MCF 10A (cell line): ENCODE measurements at regions of chr1 and their contacts with region 1.

Region 1: DNA sequence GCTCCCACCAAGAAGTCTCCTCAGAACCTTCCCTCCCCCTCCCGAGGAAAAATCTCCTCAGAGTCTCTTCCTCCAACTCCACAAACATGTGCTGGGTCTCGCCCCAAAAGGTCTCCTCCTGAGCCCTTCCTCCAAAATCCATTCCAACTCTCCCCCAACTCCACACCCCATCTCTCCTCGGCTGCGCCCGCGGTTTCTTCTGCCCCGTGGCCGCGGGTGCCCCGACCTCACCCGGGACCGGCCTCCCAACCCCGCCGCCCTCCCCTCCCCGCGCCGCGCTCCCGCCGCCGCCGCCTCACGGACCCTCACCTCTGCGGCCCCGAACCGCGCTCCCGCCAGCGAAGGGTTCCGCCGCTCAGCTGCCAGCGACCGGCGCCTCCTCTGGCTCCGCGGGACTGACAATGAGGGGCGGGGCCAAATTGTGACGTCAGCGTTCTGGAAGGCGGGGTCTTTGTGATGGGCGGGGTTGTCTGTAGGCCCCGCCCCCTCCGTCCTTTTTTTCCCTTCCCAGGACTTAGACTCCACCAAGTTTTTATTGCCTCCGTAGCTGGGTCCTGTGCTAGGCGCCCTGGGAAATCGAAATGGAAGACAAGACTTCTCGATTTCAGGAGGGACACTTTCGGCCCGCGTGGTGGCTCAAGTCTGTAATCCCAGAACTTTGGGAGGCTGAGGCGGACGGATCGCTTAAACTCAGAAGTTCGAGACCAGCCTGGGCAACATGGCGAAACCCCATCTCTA is at the start of gene LUZP1:
- DNase-seq: peak; percentile 90
- H3K4me3 Mint-ChIP-seq: peak within 1 kb of the TSS; percentile 89
- H3K27ac Mint-ChIP-seq: peak within 1 kb of the TSS; percentile 89
- H3K4me1 Mint-ChIP-seq: peaks cover 26% of the 10 kb centered on the region
- H3K27me3 Mint-ChIP-seq: no peaks in the 10 kb centered on the region
- CTCF ChIP-seq: no peak
- total RNA-seq, gene LUZP1: 30.1 and 37.2 TPM in 2 replicates

Region 2: DNA sequence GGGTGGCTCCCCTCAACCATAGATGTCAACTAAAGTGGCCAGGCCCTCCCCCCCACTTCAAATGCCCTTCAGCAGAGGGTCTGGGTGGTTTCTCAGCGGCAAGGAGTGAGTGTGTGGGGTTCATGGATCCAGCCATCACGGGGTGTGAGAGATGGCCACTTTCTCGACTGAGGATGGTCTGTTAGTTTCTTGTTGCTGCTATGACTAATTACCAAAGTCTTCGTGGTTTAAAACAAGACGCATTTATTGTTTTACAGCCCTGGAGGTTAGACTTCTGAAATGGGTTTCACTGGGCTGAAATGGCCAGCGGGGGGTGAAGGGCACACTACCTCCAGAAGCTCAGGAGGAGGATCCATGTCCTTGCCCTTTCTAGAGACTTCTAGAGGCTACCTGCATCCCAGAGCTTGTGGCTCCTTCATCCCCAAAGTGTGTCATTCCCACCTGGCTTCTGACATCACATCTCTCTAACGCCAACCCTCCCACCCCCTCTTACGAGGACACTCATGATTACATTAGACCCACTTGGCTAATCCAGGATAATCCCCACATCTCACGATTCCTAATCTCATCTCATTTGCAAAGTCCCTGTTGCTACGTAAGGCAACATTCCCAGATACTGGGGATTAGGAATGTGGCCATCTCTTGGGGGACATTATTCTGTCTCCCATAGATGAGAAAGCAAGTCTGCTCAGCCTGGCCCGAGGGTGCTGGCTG is 405.0 kb before region 1 on chr1:
- CTCF ChIA-PET with region 1: no interaction called
- POLR2A ChIA-PET with region 1: no interaction called
- intact Hi-C with region 1: no loop called
- DNase-seq: no peak
- H3K4me3 Mint-ChIP-seq: no peak overlapping the region
- H3K27ac Mint-ChIP-seq: no peak overlapping the region
- H3K4me1 Mint-ChIP-seq: no peaks in the 10 kb centered on the region
- H3K27me3 Mint-ChIP-seq: no peaks in the 10 kb centered on the region
- CTCF ChIP-seq: no peak

Region 3: GRCh38 chr1:22944346-22945055 is 224.1 kb before region 1 on chr1:
- CTCF ChIA-PET with region 1: no interaction called
- POLR2A ChIA-PET with region 1: no interaction called
- intact Hi-C with region 1: no loop called
- DNase-seq: no peak
- H3K4me3 Mint-ChIP-seq: no peak overlapping the region
- H3K27ac Mint-ChIP-seq: no peak overlapping the region
- H3K4me1 Mint-ChIP-seq: no peaks in the 10 kb centered on the region
- H3K27me3 Mint-ChIP-seq: no peaks in the 10 kb centered on the region
- CTCF ChIP-seq: no peak

Region 4: DNA sequence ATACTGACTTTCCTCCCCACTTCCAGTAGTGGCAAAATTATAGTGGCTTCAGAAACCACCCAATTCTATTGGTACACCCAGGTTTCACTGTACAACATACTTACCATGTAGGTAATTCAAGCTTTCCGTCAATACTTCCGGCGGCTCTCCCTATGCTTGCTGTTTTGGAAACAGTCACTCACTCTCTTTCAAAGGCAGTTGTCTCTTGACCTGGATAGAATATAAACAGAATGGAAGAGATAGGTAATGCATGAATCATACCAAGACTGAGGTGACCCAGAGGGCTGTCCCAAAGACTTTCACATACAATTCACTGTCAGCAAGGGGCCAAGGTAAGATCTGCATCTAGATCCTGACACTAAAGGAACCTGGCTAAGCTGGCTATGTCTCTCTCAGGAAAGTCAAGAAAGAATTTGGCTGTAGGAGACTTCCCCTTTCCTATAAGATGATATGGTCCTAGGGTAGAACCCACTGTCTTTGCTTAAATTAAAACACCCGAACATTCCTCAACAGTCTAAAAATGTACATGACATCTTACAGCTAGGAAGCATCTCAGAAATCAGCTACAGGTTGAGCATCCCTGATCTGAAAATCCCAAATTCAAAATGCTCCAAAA is 59.6 kb before region 1 on chr1:
- CTCF ChIA-PET with region 1: no interaction called
- POLR2A ChIA-PET with region 1: interaction called, 154 read pairs
- intact Hi-C with region 1: no loop called
- DNase-seq: no peak
- H3K4me3 Mint-ChIP-seq: no peak overlapping the region
- H3K27ac Mint-ChIP-seq: no peak overlapping the region
- H3K4me1 Mint-ChIP-seq: peaks cover 26% of the 10 kb centered on the region
- H3K27me3 Mint-ChIP-seq: no peaks in the 10 kb centered on the region
- CTCF ChIP-seq: no peak

Region 5: GRCh38 chr1:23122023-23122748 is 46.4 kb before region 1 on chr1:
- CTCF ChIA-PET with region 1: interaction called, 4 read pairs
- POLR2A ChIA-PET with region 1: interaction called, 137 read pairs
- intact Hi-C with region 1: no loop called
- DNase-seq: peak; percentile 57
- H3K4me3 Mint-ChIP-seq: no peak overlapping the region
- H3K27ac Mint-ChIP-seq: no peak overlapping the region
- H3K4me1 Mint-ChIP-seq: peaks cover 32% of the 10 kb centered on the region
- H3K27me3 Mint-ChIP-seq: no peaks in the 10 kb centered on the region
- CTCF ChIP-seq: no peak

Region 6: DNA sequence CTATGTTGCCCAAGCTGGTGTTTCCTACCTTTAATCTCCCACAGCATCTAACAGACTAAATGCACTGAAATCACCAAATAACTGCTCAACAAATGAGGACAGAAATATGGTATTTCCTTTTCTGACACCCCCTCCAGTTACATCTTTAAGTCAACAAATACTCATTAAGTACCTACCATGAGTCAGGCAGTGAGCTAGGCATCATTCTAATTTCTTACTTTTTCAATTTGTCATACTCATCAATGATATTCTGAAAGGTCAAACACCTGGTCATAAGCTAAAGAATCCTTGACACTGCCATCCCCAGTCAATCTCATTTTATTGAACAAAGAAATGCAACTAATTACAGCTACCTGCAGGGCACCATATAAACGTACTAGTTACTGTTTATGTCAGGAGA is 36.6 kb before region 1 on chr1:
- CTCF ChIA-PET with region 1: interaction called, 7 read pairs
- POLR2A ChIA-PET with region 1: interaction called, 137 read pairs
- intact Hi-C with region 1: no loop called
- DNase-seq: no peak
- H3K4me3 Mint-ChIP-seq: no peak overlapping the region
- H3K27ac Mint-ChIP-seq: no peak overlapping the region
- H3K4me1 Mint-ChIP-seq: peaks cover 27% of the 10 kb centered on the region
- H3K27me3 Mint-ChIP-seq: no peaks in the 10 kb centered on the region
- CTCF ChIP-seq: no peak

Region 7: GRCh38 chr1:23150125-23150524 is 18.5 kb before region 1 on chr1:
- CTCF ChIA-PET with region 1: interaction called, 3 read pairs
- POLR2A ChIA-PET with region 1: interaction called, 12 read pairs
- intact Hi-C with region 1: no loop called
- DNase-seq: no peak
- H3K4me3 Mint-ChIP-seq: no peak overlapping the region
- H3K27ac Mint-ChIP-seq: peak overlapping the region; percentile 3
- H3K4me1 Mint-ChIP-seq: peaks cover 45% of the 10 kb centered on the region
- H3K27me3 Mint-ChIP-seq: no peaks in the 10 kb centered on the region
- CTCF ChIP-seq: no peak